CD4-positive, alpha-beta T cell (primary cell): ENCODE measurements at regions of chr2 and their contacts with region 1.

Region 1: GRCh38 chr2:234374736-234375135 is 122.1 kb downstream of the ARL4C start:
- DNase-seq: no peak
- ATAC-seq: no peak
- H3K4me3 ChIP-seq: no peak overlapping the region
- H3K4me3 Mint-ChIP-seq: no peak overlapping the region
- H3K27ac ChIP-seq: no peak overlapping the region
- H3K27ac Mint-ChIP-seq: peak overlapping the region; percentile 88
- H3K4me1 ChIP-seq: peaks cover 39% of the 10 kb centered on the region
- H3K4me1 Mint-ChIP-seq: peaks cover 59% of the 10 kb centered on the region
- H3K27me3 ChIP-seq: no peaks in the 10 kb centered on the region
- H3K27me3 Mint-ChIP-seq: no peaks in the 10 kb centered on the region
- CTCF ChIP-seq: no peak

Region 2: DNA sequence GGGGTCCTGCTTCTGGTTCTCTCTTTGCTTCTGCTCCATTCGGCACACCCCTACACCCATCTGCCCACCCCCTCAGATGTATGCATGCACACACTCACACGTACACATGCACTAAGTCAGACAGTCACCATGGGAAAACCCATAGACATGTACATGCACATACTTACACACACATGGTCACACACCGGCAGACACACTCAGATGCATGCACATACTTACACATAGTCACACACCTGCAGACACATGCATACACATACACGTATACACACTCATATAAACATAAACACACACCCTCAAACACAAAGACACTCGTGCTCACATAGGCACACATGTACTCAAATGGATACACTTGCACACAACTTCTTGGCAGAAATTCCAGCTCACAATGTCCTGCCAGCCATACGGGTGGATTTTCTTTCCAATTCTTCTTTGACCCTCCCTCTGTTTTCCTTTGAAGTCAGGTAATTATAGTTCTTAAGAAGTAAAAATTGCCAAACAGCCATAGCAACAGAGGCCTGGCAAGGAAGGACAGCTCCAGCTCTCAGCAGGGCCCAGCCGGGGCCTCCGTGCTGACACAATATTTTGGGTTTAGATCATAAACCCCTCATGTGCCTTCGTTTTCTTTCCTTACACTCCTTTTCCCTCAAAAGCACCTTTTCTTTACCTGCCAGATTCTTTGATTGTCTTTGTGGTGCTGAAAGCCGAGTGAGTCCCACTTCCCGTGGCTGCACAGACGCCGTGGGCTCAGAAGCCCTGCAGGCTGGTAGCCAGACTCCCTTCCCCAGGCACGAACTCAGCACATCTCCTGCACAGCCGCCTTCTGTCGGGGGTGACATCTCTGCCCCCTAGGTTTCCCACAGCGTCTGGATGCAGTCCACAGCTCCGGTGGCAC is 73.6 kb before region 1 on chr2:
- CTCF ChIA-PET with region 1: no interaction called
- POLR2A ChIA-PET with region 1: no interaction called
- intact Hi-C with region 1: no loop called
- DNase-seq: peak in 2 of 14 experiments; percentile 12 to 44
- ATAC-seq: peak; percentile 28
- H3K4me3 ChIP-seq: no peak overlapping the region
- H3K4me3 Mint-ChIP-seq: peak overlapping the region; percentile 5
- H3K27ac ChIP-seq: no peak overlapping the region
- H3K27ac Mint-ChIP-seq: peak overlapping the region; percentile 71
- H3K4me1 ChIP-seq: peaks cover 52% of the 10 kb centered on the region
- H3K4me1 Mint-ChIP-seq: peaks cover 76% of the 10 kb centered on the region
- H3K27me3 ChIP-seq: no peaks in the 10 kb centered on the region
- H3K27me3 Mint-ChIP-seq: no peaks in the 10 kb centered on the region
- CTCF ChIP-seq: no peak

Region 3: DNA sequence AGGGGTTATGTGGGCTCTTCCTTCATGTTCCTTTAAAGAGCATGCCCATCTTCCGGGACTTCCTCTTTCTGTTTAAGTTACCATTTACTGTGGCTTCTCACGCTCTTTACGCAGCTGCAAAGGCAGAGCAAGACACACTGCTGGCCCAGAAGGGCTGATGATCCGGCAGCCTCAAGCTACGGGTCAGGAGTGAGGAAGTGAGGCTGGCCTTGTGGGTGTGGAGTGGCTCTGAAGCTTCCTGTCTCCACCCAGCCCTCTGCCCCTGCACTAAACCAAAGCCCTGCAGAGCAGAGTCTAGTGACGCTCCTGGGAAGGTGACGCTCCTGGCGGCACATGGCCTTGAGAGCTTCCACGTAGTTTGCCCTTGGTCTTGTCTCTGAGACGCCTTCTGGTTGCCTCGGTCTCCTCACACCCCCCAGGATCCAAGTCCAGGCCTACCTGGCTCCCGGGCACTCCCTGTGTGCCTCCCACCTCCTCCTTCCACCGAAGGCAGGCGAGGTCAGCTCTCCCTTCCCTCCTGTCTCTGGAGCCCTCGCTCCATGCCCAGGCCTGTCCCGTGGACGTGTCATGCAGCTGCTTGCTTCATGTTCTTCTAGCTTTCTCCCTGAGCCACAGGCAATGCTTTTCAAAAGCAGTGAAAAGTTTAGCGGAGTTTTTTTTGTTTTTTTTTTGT is 71.8 kb after region 1 on chr2:
- CTCF ChIA-PET with region 1: no interaction called
- POLR2A ChIA-PET with region 1: interaction called, 11 read pairs
- intact Hi-C with region 1: loop called in 1 of 2 experiments (anchors 5 kb)
- DNase-seq: peak; percentile 61 to 96 (median 74)
- ATAC-seq: peak; percentile 81
- H3K4me3 ChIP-seq: peak overlapping the region; percentile 18
- H3K4me3 Mint-ChIP-seq: peak overlapping the region; percentile 57
- H3K27ac ChIP-seq: peak overlapping the region; percentile 85 to 93
- H3K27ac Mint-ChIP-seq: peak overlapping the region; percentile 92
- H3K4me1 ChIP-seq: peaks cover 74% of the 10 kb centered on the region
- H3K4me1 Mint-ChIP-seq: peaks cover 86% of the 10 kb centered on the region
- H3K27me3 ChIP-seq: no peaks in the 10 kb centered on the region
- H3K27me3 Mint-ChIP-seq: no peaks in the 10 kb centered on the region
- CTCF ChIP-seq: no peak

Region 4: GRCh38 chr2:234483568-234484251 is 109.0 kb after region 1 on chr2:
- CTCF ChIA-PET with region 1: no interaction called
- POLR2A ChIA-PET with region 1: interaction called, 5 read pairs
- intact Hi-C with region 1: loop called in 1 of 2 experiments (anchors 5 kb)
- DNase-seq: peak; percentile 62 to 96 (median 78)
- ATAC-seq: peak; percentile 76
- H3K4me3 ChIP-seq: peak overlapping the region; percentile 19
- H3K4me3 Mint-ChIP-seq: peak overlapping the region; percentile 68
- H3K27ac ChIP-seq: peak overlapping the region; percentile 68 to 81
- H3K27ac Mint-ChIP-seq: peak overlapping the region; percentile 98
- H3K4me1 ChIP-seq: peaks cover 74% of the 10 kb centered on the region
- H3K4me1 Mint-ChIP-seq: peaks cover 94% of the 10 kb centered on the region
- H3K27me3 ChIP-seq: no peaks in the 10 kb centered on the region
- H3K27me3 Mint-ChIP-seq: no peaks in the 10 kb centered on the region
- CTCF ChIP-seq: peak; percentile 80

Region 5: DNA sequence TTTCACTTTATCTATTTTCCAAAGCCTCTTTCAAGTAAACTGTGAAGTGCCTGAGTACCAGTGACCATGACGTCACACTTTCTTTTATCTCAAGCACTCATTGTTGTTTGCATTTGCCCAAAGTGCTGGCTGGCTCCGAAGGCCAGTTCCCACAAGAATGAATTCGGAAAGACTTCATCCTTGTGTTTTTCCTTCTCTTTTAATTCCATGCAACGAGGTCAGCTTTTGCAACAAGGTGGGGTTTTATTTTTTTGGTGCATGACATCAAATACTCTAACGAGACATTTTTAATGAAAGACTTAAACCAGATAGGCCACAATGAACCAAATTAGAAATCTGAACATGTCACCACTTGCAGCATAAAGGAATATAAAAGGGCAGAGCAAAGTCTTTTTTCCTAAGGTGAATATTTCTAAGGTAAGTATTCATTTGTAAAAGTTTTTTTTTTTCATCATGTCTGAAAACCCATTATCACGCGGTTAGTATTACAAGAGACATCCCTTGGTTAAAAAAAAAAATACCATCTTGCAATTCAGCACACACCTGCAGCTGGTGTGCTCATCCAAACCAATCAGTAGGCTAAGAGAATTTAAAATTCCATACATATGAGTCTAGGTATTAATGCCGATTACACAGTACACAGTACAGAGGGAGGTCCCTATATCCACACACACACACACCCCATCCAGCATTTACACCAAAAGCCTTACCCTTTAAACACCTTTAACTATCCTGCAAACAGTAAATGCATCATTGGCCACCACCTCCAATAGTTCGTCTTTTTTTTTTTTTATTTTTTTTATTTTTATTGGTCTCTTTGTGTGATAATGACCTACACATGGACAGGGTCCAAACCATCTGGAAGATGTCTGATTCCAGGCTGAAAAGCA is 119.9 kb after region 1 on chr2:
- CTCF ChIA-PET with region 1: no interaction called
- POLR2A ChIA-PET with region 1: interaction called, 5 read pairs
- intact Hi-C with region 1: loop called (anchors 5 kb)
- DNase-seq: peak in 8 of 14 experiments; percentile 21 to 80 (median 46)
- ATAC-seq: peak; percentile 33
- H3K4me3 ChIP-seq: peak overlapping the region; percentile 94
- H3K4me3 Mint-ChIP-seq: peak overlapping the region; percentile 98
- H3K27ac ChIP-seq: peak overlapping the region; percentile 70 to 96
- H3K27ac Mint-ChIP-seq: peak overlapping the region; percentile 98
- H3K4me1 ChIP-seq: peaks cover 42% of the 10 kb centered on the region
- H3K4me1 Mint-ChIP-seq: peaks cover 65% of the 10 kb centered on the region
- H3K27me3 ChIP-seq: no peaks in the 10 kb centered on the region
- H3K27me3 Mint-ChIP-seq: peaks cover 5% of the 10 kb centered on the region
- CTCF ChIP-seq: no peak